Endothelial cell of umbilical vein (primary cell): ENCODE measurements at regions of chr1 and their contacts with region 1.

Region 1: GRCh38 chr1:54996359-54996868 is 2.3 kb upstream of the BSND start:
- DNase-seq: peak; percentile 59
- H3K4me3 ChIP-seq: no peak overlapping the region
- H3K27ac ChIP-seq: no peak overlapping the region
- H3K4me1 ChIP-seq: peaks cover 3% of the 10 kb centered on the region
- H3K27me3 ChIP-seq: peaks cover 12 to 14% of the 10 kb centered on the region in 2 experiments
- CTCF ChIP-seq: peak; percentile 77 to 87
- POLR2A ChIP-seq: no peak

Region 2: GRCh38 chr1:54671985-54672608 is 324.3 kb before region 1 on chr1:
- CTCF ChIA-PET with region 1: no interaction called
- POLR2A ChIA-PET with region 1: no interaction called
- dilution Hi-C with region 1: no loop called
- intact Hi-C with region 1: loop called (anchors 2 kb)
- DNase-seq: peak; percentile 49
- H3K4me3 ChIP-seq: no peak overlapping the region
- H3K27ac ChIP-seq: no peak overlapping the region
- H3K4me1 ChIP-seq: no peaks in the 10 kb centered on the region
- H3K27me3 ChIP-seq: peaks cover 0 to 2% of the 10 kb centered on the region in 2 experiments
- CTCF ChIP-seq: peak; percentile 63 to 78
- POLR2A ChIP-seq: no peak

Region 3: GRCh38 chr1:54874079-54874830 is 122.2 kb before region 1 on chr1:
- CTCF ChIA-PET with region 1: no interaction called
- POLR2A ChIA-PET with region 1: no interaction called
- dilution Hi-C with region 1: no loop called
- intact Hi-C with region 1: no loop called
- DNase-seq: no peak
- H3K4me3 ChIP-seq: no peak overlapping the region
- H3K27ac ChIP-seq: no peak overlapping the region
- H3K4me1 ChIP-seq: no peaks in the 10 kb centered on the region
- H3K27me3 ChIP-seq: no peaks in the 10 kb centered on the region
- CTCF ChIP-seq: no peak
- POLR2A ChIP-seq: no peak

Region 4: GRCh38 chr1:54950369-54951163 is 45.8 kb before region 1 on chr1:
- CTCF ChIA-PET with region 1: interaction called, 918 read pairs
- POLR2A ChIA-PET with region 1: no interaction called
- dilution Hi-C with region 1: no loop called
- intact Hi-C with region 1: loop called (anchors 1 kb)
- DNase-seq: peak; percentile 87
- H3K4me3 ChIP-seq: no peak overlapping the region
- H3K27ac ChIP-seq: peak overlapping the region; percentile 15
- H3K4me1 ChIP-seq: peaks cover 25% of the 10 kb centered on the region
- H3K27me3 ChIP-seq: peaks cover 0 to 1% of the 10 kb centered on the region in 2 experiments
- CTCF ChIP-seq: peak; percentile 71 to 79
- POLR2A ChIP-seq: no peak

Region 5: DNA sequence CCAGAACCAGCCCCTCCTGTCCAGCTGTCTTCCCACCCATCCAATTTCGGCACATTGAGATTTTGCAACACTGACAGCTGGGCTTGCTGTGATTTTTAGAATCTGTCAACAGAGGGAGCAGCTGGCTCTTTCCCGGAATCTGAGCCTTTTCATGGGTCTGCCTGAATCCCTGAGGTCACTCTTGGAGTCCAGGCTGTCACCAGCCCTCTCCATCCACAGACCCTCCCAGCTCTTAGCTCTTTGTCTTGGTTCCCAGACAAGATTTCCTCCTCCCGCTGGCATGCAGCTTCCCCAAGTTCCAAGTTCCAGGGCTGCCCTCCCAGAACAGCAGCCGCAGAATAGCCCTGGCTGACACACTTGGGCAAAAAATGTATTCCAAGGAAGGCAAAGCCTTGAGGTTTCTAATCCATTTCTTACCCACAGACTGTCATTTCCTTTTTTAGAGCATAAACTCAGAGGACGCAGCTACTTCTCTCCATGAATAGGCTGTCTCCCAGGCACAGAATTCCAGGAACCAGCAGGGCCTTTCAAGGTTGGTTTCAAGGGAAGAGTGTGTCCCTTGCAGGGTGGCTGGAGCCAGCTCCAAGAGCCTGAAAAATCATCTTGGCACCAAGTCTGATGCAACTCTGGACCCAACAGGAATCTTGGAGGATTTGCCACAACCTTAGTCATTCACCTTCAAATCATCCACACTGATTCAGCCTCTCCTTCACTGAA is 23.1 kb before region 1 on chr1:
- CTCF ChIA-PET with region 1: interaction called, 11 read pairs
- POLR2A ChIA-PET with region 1: no interaction called
- dilution Hi-C with region 1: no loop called
- intact Hi-C with region 1: no loop called
- DNase-seq: no peak
- H3K4me3 ChIP-seq: no peak overlapping the region
- H3K27ac ChIP-seq: no peak overlapping the region
- H3K4me1 ChIP-seq: peaks cover 8% of the 10 kb centered on the region
- H3K27me3 ChIP-seq: peaks cover 2 to 6% of the 10 kb centered on the region in 2 experiments
- CTCF ChIP-seq: peak in 1 of 2 donors; percentile 32
- POLR2A ChIP-seq: no peak

Region 6: DNA sequence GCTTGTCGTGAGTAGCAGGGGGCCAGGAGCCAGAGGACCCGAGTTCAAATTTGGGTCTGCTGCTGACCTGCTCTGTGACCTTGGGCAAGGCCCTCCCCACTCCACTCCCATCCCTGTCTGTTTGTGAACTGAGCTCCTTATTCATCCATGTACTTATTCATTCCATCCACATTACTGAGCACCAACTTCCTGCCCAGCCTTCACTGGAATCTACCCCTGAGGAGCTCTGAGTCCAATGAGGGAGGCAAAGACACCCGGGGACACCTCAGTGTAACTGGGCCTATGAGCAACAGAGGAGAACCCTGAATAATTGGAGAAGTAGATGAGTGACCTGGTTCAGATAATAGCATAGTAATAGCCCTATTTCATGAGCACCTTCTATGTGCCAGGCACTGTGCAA is 11.2 kb after region 1 on chr1:
- CTCF ChIA-PET with region 1: interaction called, 10 read pairs
- POLR2A ChIA-PET with region 1: no interaction called
- dilution Hi-C with region 1: no loop called
- intact Hi-C with region 1: no loop called
- DNase-seq: no peak
- H3K4me3 ChIP-seq: no peak overlapping the region
- H3K27ac ChIP-seq: no peak overlapping the region
- H3K4me1 ChIP-seq: no peaks in the 10 kb centered on the region
- H3K27me3 ChIP-seq: no peaks in the 10 kb centered on the region
- CTCF ChIP-seq: no peak
- POLR2A ChIP-seq: no peak

Region 7: GRCh38 chr1:55192093-55192492 is 195.7 kb after region 1 on chr1:
- CTCF ChIA-PET with region 1: no interaction called
- POLR2A ChIA-PET with region 1: no interaction called
- dilution Hi-C with region 1: no loop called
- intact Hi-C with region 1: no loop called
- DNase-seq: no peak
- H3K4me3 ChIP-seq: no peak overlapping the region
- H3K27ac ChIP-seq: no peak overlapping the region
- H3K4me1 ChIP-seq: no peaks in the 10 kb centered on the region
- H3K27me3 ChIP-seq: no peaks in the 10 kb centered on the region
- CTCF ChIP-seq: no peak
- POLR2A ChIP-seq: no peak